ENCODE measurements at regions of chr17 and their contacts with region 1.

Region 1: DNA sequence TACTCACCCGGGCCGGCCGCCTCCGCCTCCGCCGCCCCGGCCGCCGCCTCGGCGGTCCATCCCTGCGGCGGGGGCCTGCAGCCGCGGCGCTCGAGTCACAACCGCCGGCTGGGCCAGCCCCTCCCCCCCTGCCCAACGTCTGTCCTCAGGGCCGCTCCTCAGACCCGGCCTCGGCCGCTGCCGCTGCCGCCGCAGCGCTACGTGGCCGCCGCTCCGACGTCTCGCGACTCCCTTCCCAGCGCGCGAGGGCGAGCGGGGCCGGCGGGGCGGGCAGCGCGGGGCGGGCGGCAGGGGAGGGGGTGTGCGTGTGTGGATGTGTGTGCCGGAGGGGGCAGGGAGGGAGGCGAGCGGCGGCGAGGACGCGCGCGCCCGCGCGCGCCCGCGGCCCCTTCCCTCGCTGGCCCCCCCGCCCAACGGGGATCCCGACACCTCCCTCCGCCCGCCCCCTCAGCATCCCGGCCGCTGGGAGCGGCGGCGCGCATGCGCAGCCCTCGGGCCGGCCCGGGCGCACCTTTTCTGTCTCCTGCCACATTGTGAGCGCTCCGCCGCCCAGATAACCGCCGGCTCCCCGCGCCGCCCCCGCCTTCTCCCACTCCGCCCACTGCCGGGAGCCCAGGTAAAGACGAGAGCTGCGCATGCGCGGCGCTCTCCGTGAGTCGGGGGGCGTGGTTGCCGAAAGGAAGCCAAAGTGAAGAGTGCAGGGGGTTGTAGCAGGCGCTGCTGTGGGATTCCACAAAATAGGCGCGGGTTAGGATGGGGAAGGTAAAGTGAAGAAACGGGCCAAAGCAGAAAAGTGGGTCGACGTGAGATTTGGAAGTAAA is at the start of gene ZNF652:
- DNase-seq: peak; percentile 91 to 98 (median 95)
- ATAC-seq: peak; percentile 59
- H3K4me3 ChIP-seq: peak within 1 kb of the TSS; percentile 50 to 90
- H3K4me3 Mint-ChIP-seq: peak within 1 kb of the TSS; percentile 94
- H3K27ac ChIP-seq: peak within 1 kb of the TSS; percentile 58 to 75
- H3K27ac Mint-ChIP-seq: peak within 1 kb of the TSS; percentile 97
- H3K4me1 ChIP-seq: peaks cover 46% of the 10 kb centered on the region
- H3K4me1 Mint-ChIP-seq: peaks cover 68% of the 10 kb centered on the region
- H3K27me3 ChIP-seq: no peaks in the 10 kb centered on the region
- H3K27me3 Mint-ChIP-seq: no peaks in the 10 kb centered on the region
- CTCF ChIP-seq: no peak
- total RNA-seq, gene ZNF652: 28.1 to 28.6 TPM

Region 2: GRCh38 chr17:48944519-48945260 is 417.4 kb before region 1 on chr17 and contains the start of gene SNF8:
- CTCF ChIA-PET with region 1: no interaction called
- POLR2A ChIA-PET with region 1: no interaction called
- intact Hi-C with region 1: loop called in 1 of 2 experiments (anchors 2 kb)
- DNase-seq: peak; percentile 83 to 96 (median 92)
- ATAC-seq: peak; percentile 93
- H3K4me3 ChIP-seq: peak within 1 kb of the TSS; percentile 94 to 98
- H3K4me3 Mint-ChIP-seq: peak within 1 kb of the TSS; percentile 97
- H3K27ac ChIP-seq: peak within 1 kb of the TSS; percentile 90 to 93
- H3K27ac Mint-ChIP-seq: peak within 1 kb of the TSS; percentile 97
- H3K4me1 ChIP-seq: peaks cover 25% of the 10 kb centered on the region
- H3K4me1 Mint-ChIP-seq: peaks cover 19% of the 10 kb centered on the region
- H3K27me3 ChIP-seq: no peaks in the 10 kb centered on the region
- H3K27me3 Mint-ChIP-seq: no peaks in the 10 kb centered on the region
- CTCF ChIP-seq: no peak
- total RNA-seq, gene SNF8: 61.7 to 64.3 TPM

Region 3: DNA sequence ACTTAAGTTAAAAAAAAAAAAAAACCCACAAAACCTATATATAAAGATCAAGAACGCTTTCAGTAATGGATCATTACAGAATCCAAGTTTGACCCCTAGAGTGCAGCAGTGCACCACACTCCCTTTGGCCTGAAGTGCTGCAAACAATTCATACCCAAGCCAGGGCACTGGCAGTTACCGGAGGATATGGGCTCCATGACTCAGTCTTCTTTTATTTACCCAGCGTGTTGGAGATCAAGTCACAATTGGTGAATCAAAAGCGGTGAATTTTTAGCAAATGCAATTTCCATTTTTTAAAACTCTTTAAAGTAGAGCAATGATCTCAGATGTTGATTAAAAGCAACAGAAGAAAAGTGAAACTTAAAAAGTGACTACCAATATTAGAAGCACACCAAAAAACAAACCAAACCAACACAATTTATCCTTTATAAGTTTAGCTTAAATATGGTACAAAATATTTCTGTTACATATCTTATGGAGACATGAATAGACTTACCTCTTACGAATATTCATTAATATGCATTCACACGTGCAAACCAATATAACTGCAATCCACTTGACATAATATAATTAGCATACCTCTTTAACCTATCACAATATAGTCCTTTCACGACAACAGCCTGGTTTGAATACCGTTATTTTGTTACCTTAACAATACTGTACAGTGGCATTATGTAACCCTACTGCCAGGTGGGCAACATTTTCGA is 46.4 kb before region 1 on chr17:
- CTCF ChIA-PET with region 1: interaction called, 262 read pairs
- POLR2A ChIA-PET with region 1: interaction called, 4 read pairs
- intact Hi-C with region 1: loop called in 1 of 2 experiments (anchors 1 kb)
- DNase-seq: peak; percentile 54 to 89 (median 80)
- ATAC-seq: peak; percentile 100
- H3K4me3 ChIP-seq: no peak overlapping the region
- H3K4me3 Mint-ChIP-seq: peak overlapping the region; percentile 69
- H3K27ac ChIP-seq: peak overlapping the region in 1 of 2 experiments; percentile 38
- H3K27ac Mint-ChIP-seq: peak overlapping the region; percentile 84
- H3K4me1 ChIP-seq: peaks cover 10% of the 10 kb centered on the region
- H3K4me1 Mint-ChIP-seq: peaks cover 23% of the 10 kb centered on the region
- H3K27me3 ChIP-seq: no peaks in the 10 kb centered on the region
- H3K27me3 Mint-ChIP-seq: no peaks in the 10 kb centered on the region
- CTCF ChIP-seq: peak; percentile 95

Region 4: GRCh38 chr17:49349535-49349934 is 12.6 kb before region 1 on chr17:
- CTCF ChIA-PET with region 1: interaction called, 17 read pairs
- POLR2A ChIA-PET with region 1: interaction called, 32 read pairs
- intact Hi-C with region 1: no loop called
- DNase-seq: no peak
- ATAC-seq: no peak
- H3K4me3 ChIP-seq: no peak overlapping the region
- H3K4me3 Mint-ChIP-seq: no peak overlapping the region
- H3K27ac ChIP-seq: no peak overlapping the region
- H3K27ac Mint-ChIP-seq: no peak overlapping the region
- H3K4me1 ChIP-seq: peaks cover 31% of the 10 kb centered on the region
- H3K4me1 Mint-ChIP-seq: peaks cover 54% of the 10 kb centered on the region
- H3K27me3 ChIP-seq: no peaks in the 10 kb centered on the region
- H3K27me3 Mint-ChIP-seq: no peaks in the 10 kb centered on the region
- CTCF ChIP-seq: no peak

Region 5: GRCh38 chr17:49414622-49415350 is 52.7 kb after region 1 on chr17 and contains the start of gene PHB1:
- CTCF ChIA-PET with region 1: no interaction called
- POLR2A ChIA-PET with region 1: interaction called, 4 read pairs
- intact Hi-C with region 1: loop called (anchors 1 to 5 kb)
- DNase-seq: peak; percentile 86 to 98 (median 94)
- ATAC-seq: peak; percentile 98
- H3K4me3 ChIP-seq: peak within 1 kb of the TSS; percentile 80 to 96
- H3K4me3 Mint-ChIP-seq: peak within 1 kb of the TSS; percentile 99
- H3K27ac ChIP-seq: peak within 1 kb of the TSS; percentile 43 to 61
- H3K27ac Mint-ChIP-seq: peak within 1 kb of the TSS; percentile 93
- H3K4me1 ChIP-seq: peaks cover 12% of the 10 kb centered on the region
- H3K4me1 Mint-ChIP-seq: peaks cover 31% of the 10 kb centered on the region
- H3K27me3 ChIP-seq: no peaks in the 10 kb centered on the region
- H3K27me3 Mint-ChIP-seq: no peaks in the 10 kb centered on the region
- CTCF ChIP-seq: no peak
- total RNA-seq, gene PHB1: 26.3 to 27.0 TPM

Region 6: DNA sequence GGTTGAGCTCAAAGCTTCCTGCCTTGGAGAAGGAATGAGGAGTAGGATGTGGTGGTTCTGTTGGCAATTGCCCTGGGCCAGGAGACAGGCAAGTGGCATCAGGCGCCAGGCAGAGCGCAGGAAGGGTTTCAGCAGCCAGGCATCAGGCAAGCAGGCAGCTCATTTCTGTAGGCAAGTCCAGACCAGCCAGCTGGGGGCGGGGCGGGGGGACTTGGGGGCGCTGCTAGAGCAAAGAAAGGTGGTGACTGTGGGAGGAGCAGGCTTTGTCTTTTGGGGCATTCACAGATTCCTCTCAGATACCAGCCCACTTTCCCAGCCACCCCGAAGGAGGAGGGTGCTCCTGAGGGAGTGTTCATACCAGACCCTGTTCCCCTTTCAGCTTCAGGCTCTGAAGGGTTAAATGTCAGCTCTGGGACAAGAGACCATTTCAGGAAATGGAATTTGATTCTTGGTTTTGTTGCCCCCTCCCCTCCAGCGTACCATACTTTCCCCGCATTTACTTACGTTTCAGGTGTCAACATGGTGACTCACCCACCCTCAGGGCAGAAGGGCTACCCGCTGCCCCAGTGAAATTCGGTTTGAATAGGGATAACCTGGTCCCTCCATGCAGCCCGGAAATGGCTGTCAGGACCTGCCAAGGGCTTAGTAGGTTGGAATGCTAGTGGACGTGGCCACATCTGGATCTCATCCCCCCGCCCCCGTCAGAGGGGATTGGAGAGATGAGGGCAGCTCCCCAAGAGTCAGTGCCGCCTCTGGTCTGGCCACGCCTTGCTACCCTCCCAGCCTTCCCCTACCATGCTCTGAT is 146.2 kb after region 1 on chr17:
- CTCF ChIA-PET with region 1: no interaction called
- POLR2A ChIA-PET with region 1: no interaction called
- intact Hi-C with region 1: no loop called
- DNase-seq: no peak
- ATAC-seq: no peak
- H3K4me3 ChIP-seq: no peak overlapping the region
- H3K4me3 Mint-ChIP-seq: no peak overlapping the region
- H3K27ac ChIP-seq: no peak overlapping the region
- H3K27ac Mint-ChIP-seq: no peak overlapping the region
- H3K4me1 ChIP-seq: no peaks in the 10 kb centered on the region
- H3K4me1 Mint-ChIP-seq: no peaks in the 10 kb centered on the region
- H3K27me3 ChIP-seq: peaks cover under 1 to 9% of the 10 kb centered on the region in 2 experiments
- H3K27me3 Mint-ChIP-seq: peaks cover 39% of the 10 kb centered on the region
- CTCF ChIP-seq: no peak

Region 7: DNA sequence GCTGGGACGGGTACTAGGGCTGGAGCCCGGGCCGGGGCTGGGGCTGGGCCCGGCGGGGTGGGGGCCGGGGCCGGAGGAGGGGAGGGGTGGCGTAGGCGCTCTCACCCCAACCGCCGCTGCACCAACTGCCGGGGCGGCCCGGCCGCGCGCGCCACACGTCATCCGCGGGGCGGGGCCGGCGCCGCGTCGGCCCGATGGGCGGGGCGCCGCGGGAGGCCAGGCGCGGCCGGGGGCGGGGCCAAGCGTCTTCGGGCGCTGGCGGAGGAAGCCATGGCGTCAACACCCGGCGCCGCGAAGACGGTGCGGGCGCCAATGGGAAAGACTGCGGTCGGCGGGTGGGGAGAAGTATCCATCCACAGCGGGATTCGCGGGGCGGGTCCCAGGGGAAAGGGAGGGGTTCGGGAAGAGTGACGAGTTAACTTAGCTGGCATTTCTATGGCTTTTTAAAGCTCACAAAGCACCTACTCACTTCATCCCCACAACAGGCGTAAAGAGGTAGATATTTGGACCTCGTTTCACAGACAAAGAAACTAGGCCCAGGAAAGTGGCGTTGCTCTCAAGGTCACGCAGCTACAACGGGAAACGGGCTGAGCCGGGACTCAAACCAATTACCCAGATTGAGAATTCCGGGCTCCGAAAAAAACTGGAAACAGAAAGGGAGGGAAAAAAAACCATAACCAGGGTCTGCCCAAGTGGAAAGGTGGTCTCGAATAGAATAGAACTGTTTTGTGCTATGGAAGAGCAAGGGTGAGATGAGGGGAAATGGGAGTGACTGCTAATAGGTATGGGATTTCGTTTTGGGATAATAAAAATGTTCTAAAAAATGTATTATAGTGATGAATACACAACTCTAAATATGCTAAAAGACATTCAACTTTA is 1758.9 kb after region 1 on chr17 and contains the start of gene SPAG9:
- CTCF ChIA-PET with region 1: no interaction called
- POLR2A ChIA-PET with region 1: no interaction called
- intact Hi-C with region 1: loop called in 1 of 2 experiments (anchors 5 kb)
- DNase-seq: peak; percentile 79 to 96 (median 88)
- ATAC-seq: peak; percentile 84
- H3K4me3 ChIP-seq: peak within 1 kb of the TSS; percentile 96
- H3K4me3 Mint-ChIP-seq: peak within 1 kb of the TSS; percentile 94
- H3K27ac ChIP-seq: peak within 1 kb of the TSS; percentile 95
- H3K27ac Mint-ChIP-seq: peak within 1 kb of the TSS; percentile 98
- H3K4me1 ChIP-seq: peaks cover 38% of the 10 kb centered on the region
- H3K4me1 Mint-ChIP-seq: peaks cover 49% of the 10 kb centered on the region
- H3K27me3 ChIP-seq: no peaks in the 10 kb centered on the region
- H3K27me3 Mint-ChIP-seq: no peaks in the 10 kb centered on the region
- CTCF ChIP-seq: no peak
- total RNA-seq, gene SPAG9: 75.7 to 77.6 TPM